ENCODE measurements at regions of chr16 and their contacts with region 1.

Region 1: DNA sequence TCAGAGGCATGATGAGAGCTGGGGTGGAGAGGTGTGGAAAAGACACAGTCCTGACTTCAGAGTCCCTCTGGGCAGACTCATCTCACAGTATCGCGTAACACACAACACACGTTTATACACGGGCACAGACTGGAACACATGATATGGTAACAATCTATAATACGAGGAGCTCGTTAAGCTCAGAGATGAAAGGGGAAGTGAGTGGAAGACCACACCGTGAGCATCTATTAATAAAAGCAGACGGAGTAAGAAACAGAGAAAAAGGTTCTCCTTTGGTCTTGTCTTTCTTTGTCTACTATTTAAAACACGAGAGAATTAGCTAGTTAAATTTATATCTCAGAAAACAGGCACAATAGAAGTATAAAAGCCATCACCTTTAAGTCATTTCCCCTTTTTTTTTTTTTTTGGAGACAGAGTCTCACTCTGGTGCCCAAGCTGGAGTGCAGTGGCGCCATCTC is 13.5 kb downstream of the ANKRD11 start:
- DNase-seq: no peak
- ATAC-seq: peak in 3 of 4 experiments; percentile 4 to 32 (median 27)
- H3K4me3 ChIP-seq: no peak overlapping the region
- H3K4me3 Mint-ChIP-seq: peak overlapping the region; percentile 52 to 81 (median 57)
- H3K27ac ChIP-seq: no peak overlapping the region
- H3K27ac Mint-ChIP-seq: peak overlapping the region; percentile 60 to 76
- H3K4me1 ChIP-seq: peaks cover 75 to 100% of the 10 kb centered on the region in 2 experiments
- H3K4me1 Mint-ChIP-seq: peaks cover 90 to 95% (median 92%) of the 10 kb centered on the region in 3 donors
- H3K27me3 ChIP-seq: no peaks in the 10 kb centered on the region
- H3K27me3 Mint-ChIP-seq: no peaks in the 10 kb centered on the region

Region 2: DNA sequence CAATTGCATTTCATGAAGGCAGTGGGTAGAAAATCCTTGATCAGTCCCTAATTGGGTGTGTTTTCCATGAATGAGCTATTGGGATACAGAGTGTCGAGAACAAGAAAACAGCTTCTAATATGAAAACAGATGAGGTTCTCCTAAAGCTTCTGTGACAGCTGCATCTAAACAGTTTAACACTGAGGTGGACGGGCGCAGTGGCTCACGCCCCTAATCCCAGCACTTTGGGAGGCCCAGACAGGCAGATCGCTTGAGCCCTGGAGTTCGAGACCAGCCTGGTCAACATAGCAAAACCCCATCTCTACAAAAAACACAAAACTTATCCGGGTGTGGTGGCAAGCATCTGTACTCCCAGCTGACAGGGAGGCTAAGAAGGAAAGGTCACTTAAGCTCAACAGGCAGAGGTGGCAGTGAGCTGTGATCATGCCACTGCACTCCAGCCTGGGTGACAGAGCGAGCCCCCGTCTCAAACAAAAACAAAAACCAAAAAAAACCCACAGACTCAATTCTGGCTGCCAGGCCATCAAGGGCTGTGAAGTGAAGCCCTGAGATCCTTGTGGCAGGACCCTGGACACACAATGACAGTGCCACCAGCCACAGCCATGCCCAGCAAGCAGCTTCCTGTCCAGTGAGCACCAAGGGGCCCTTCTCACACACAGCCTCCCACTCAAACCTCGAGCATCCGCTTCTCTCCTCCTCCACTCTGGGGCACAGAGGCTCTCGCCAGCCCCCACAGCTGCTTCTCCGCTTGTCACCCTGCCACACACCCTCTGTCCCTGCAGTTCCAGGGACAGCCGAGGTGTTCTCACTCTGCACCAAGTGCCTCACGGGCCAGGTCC is 30.5 kb before region 1 on chr16:
- CTCF ChIA-PET with region 1: interaction called in 1 of 2 experiments, 3 read pairs
- POLR2A ChIA-PET with region 1: interaction called, 3 to 18 read pairs
- DNase-seq: peak in 6 of 35 experiments; percentile 20 to 38 (median 28)
- ATAC-seq: peak; percentile 28 to 54 (median 46)
- H3K4me3 ChIP-seq: peak overlapping the region in 1 of 2 donors; percentile 40
- H3K4me3 Mint-ChIP-seq: peak overlapping the region; percentile 61 to 80 (median 74)
- H3K27ac ChIP-seq: peak overlapping the region; percentile 35
- H3K27ac Mint-ChIP-seq: peak overlapping the region; percentile 83 to 89
- H3K4me1 ChIP-seq: peaks cover 64 to 96% of the 10 kb centered on the region in 2 experiments
- H3K4me1 Mint-ChIP-seq: peaks cover 94 to 100% (median 95%) of the 10 kb centered on the region in 3 donors
- H3K27me3 ChIP-seq: no peaks in the 10 kb centered on the region
- H3K27me3 Mint-ChIP-seq: no peaks in the 10 kb centered on the region

Measured in T-cell (primary cell).